Gastrocnemius medialis (tissue), 4 donors: ENCODE measurements at regions of chrX and their contacts with region 1.

Region 1: DNA sequence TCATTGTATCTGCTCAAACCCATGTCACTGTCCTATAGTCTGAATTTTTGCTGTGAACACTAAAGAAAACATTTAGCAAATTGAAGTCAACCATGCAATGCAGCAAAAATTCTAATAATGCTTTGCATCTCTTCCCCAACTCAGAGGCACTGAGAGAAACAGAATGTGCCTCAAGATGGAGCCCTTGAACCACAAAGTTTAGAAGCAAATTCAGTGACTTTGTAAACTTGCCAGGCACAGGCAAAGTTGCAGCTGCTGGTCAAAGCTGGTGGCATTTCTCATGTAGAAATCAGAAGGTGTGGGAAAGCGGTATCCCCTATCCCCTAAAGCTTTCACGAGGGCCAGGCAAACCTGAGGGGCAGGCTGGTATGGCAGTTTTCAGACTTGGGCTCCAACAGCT is 121.7 kb upstream of the DIPK2B start:
- DNase-seq: peak; percentile 1 to 8
- ATAC-seq: no peak
- H3K4me3 ChIP-seq: no peak overlapping the region
- H3K27ac ChIP-seq: no peak overlapping the region
- H3K4me1 ChIP-seq: no peaks in the 10 kb centered on the region
- H3K27me3 ChIP-seq: no peaks in the 10 kb centered on the region
- CTCF ChIP-seq: peak in 3 of 5 experiments; percentile 24 to 48 (median 46)
- POLR2A ChIP-seq: no peak

Region 2: GRCh38 chrX:45557390-45557789 is 235.0 kb after region 1 on chrX:
- in situ Hi-C with region 1: no loop called
- intact Hi-C with region 1: loop called (anchors 10 kb)
- DNase-seq: no peak
- ATAC-seq: no peak
- H3K4me3 ChIP-seq: no peak overlapping the region
- H3K27ac ChIP-seq: no peak overlapping the region
- H3K4me1 ChIP-seq: no peaks in the 10 kb centered on the region
- H3K27me3 ChIP-seq: no peaks in the 10 kb centered on the region
- CTCF ChIP-seq: peak in 2 of 5 experiments; percentile 9 to 28
- POLR2A ChIP-seq: no peak

Region 3: GRCh38 chrX:45849253-45849862 is 527.0 kb after region 1 on chrX:
- in situ Hi-C with region 1: no loop called
- intact Hi-C with region 1: loop called (anchors 10 kb)
- DNase-seq: no peak
- ATAC-seq: no peak
- H3K4me3 ChIP-seq: peak overlapping the region in 1 of 4 donors; percentile 46
- H3K27ac ChIP-seq: no peak overlapping the region
- H3K4me1 ChIP-seq: no peaks in the 10 kb centered on the region
- H3K27me3 ChIP-seq: peaks cover 3 to 8% (median 8%) of the 10 kb centered on the region in 3 donors
- CTCF ChIP-seq: peak in 1 of 5 experiments; percentile 24
- POLR2A ChIP-seq: no peak

Region 4: GRCh38 chrX:46408553-46409407 is 1086.4 kb after region 1 on chrX:
- in situ Hi-C with region 1: loop called in 3 of 4 experiments (anchors 25 kb)
- intact Hi-C with region 1: no loop called
- DNase-seq: peak in 1 of 2 donors; percentile 24
- ATAC-seq: no peak
- H3K4me3 ChIP-seq: no peak overlapping the region
- H3K27ac ChIP-seq: no peak overlapping the region
- H3K4me1 ChIP-seq: no peaks in the 10 kb centered on the region
- H3K27me3 ChIP-seq: no peaks in the 10 kb centered on the region
- CTCF ChIP-seq: peak; percentile 46 to 84 (median 64)
- POLR2A ChIP-seq: no peak